ENCODE measurements at regions of chr13 and their contacts with region 1.

Region 1: GRCh38 chr13:30235216-30235615 is 72.1 kb downstream of the KATNAL1 start:
- DNase-seq: no peak
- ATAC-seq: no peak

Region 2: DNA sequence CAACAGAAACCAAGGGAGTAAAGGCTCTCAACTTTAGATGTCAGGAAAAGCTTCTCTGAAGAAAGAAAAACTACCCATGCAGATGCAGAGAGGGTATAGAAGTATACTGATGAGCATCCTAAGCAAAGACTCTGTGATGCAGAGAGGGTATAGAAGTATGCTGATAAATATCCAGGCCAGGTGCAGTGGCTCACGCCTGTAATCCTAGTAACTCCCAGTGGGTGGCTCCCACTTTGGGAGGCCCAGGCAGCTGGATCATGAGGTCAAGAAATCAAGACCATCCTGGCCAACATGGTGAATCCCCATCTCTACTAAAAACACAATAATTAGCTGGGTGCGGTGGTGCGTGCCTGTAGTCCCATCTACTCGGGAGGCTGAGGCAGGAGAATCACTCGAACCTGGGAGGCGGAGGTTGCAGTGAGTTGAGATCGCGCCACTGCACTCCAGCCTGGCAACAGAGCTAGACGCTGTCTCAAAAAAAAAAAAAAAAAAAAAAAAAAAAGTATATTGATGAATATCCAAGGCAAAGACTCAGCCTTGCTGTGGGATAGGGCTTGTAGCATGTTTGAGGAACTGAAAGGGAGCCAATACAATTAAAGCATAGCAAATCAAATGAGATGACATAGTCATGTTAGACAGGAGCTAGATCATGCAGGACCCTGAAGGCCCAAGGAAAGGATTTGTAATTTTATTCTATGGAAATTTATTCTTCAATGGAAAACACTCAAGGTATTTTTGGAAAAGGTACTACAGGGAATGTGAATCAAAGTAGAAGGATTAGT is 399.7 kb before region 1 on chr13:
- intact Hi-C with region 1: no loop called
- DNase-seq: no peak
- ATAC-seq: no peak

Region 3: GRCh38 chr13:30551189-30551588 is 316.0 kb after region 1 on chr13:
- intact Hi-C with region 1: loop called (anchors 10 kb)
- DNase-seq: no peak
- ATAC-seq: no peak

Measured in sciatic nerve (tissue), 2 donors.